Activated B cell treated with CpG ODN at 0.5 μM for 24 hours (primary cell): ENCODE measurements at regions of chr12 and their contacts with region 1.

Region 1: DNA sequence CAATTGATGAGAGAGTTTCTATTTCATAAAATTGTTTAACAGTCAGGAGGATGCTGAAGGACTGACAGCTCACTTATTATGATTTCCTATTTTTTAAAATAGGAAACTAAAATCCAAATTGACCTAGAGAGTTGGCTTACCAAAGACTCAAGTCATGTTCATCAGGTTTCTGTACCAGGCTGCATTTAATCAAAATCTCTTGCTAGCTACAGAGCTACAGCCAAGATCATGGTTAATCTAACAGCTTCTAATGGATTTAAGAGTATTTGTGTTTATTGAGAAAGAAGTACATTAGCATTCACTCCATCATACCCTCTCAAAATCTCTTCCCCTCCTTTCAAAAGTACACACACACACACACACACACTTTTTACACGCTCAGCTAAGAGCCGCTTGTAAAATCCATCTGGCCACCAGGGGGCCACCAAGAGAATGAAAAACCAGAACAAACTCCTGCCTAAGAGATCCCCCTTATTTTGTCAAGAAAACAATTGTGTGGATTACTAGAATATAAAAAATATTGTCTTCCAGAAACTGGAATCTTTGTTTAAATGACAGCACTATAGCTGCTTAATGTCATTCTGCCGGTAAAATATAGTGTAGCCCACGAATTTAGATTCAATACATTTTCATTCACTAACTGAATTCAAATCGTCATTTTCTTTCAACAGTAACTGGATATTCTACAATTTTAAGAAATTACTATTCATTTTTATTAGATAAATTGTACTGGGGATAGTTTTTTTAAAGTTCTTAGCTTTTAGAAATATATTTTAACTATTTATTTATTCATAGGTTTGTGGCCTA is 334.0 kb downstream of the BTG1 start:
- DNase-seq: peak; percentile 57
- ATAC-seq: peak; percentile 71
- H3K4me3 Mint-ChIP-seq: no peak overlapping the region
- H3K27ac Mint-ChIP-seq: no peak overlapping the region
- H3K4me1 Mint-ChIP-seq: peaks cover 7% of the 10 kb centered on the region
- H3K27me3 Mint-ChIP-seq: no peaks in the 10 kb centered on the region
- CTCF ChIP-seq: no peak

Region 2: DNA sequence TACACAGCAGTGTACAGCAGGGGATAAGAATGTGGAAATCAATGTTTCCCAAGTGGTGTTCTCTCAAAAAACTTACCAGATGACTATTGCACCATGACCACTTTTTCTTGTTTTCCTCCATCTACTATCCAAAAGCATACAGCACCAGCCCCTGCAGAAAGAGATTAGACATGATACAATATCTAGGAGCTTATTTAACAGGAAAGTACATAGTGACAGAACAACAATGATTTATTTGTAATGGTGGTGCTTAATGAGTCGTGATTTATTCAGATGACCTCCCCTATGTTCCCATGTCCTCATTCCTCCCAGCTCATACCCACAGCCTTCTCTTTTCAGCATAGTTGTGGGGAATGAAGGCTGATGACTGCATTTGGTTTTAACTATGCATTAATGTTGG is 79.6 kb before region 1 on chr12:
- CTCF ChIA-PET with region 1: no interaction called
- POLR2A ChIA-PET with region 1: no interaction called
- intact Hi-C with region 1: no loop called
- DNase-seq: no peak
- ATAC-seq: no peak
- H3K4me3 Mint-ChIP-seq: no peak overlapping the region
- H3K27ac Mint-ChIP-seq: no peak overlapping the region
- H3K4me1 Mint-ChIP-seq: no peaks in the 10 kb centered on the region
- H3K27me3 Mint-ChIP-seq: peaks cover 8% of the 10 kb centered on the region
- CTCF ChIP-seq: no peak

Region 3: DNA sequence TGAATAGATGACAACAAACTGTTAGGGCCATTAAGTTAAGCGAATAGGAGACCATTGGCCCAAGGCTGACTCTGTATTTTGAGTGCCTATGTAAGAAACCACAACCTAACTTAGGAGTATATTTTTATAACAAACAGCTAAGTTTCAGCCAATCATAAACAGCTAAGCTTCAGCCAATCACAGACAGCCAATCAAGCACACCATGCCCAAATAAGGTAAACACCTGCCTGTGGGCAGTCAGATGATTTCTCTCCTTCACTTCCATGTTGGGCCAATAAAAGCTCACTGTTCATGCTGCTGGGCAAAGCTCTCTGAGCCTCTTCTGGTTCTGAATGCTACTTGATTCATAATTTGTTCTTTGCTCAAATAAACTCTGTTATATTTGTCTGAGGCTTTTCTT is 10.6 kb before region 1 on chr12:
- CTCF ChIA-PET with region 1: interaction called, 11 read pairs
- POLR2A ChIA-PET with region 1: no interaction called
- intact Hi-C with region 1: no loop called
- DNase-seq: no peak
- ATAC-seq: no peak
- H3K4me3 Mint-ChIP-seq: no peak overlapping the region
- H3K27ac Mint-ChIP-seq: no peak overlapping the region
- H3K4me1 Mint-ChIP-seq: no peaks in the 10 kb centered on the region
- H3K27me3 Mint-ChIP-seq: peaks cover 2% of the 10 kb centered on the region
- CTCF ChIP-seq: no peak